ENCODE measurements at regions of chr18 and their contacts with region 1.

Region 1: DNA sequence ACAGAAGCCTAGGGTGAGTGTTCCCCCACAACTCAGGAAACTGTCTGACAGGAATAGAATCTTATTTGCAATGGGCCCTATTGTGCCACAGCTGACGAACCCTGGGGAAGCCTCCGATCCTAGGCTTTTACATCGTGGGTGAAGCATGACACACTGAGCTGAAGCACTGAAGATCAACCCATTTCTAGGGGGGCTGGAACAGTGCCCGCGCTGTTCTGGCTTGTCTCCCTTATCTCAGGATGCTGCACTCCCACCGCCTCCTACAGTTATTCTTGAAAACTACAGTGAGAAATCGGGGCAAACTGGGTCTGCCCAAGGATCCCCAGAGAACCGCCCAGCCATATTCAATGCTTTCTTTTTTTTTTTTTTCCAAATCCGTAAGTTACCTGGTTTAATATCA is 41.1 kb downstream of the NETO1 start:
- H3K4me3 Mint-ChIP-seq: no peak overlapping the region
- H3K27ac Mint-ChIP-seq: no peak overlapping the region
- H3K4me1 Mint-ChIP-seq: no peaks in the 10 kb centered on the region
- H3K27me3 Mint-ChIP-seq: no peaks in the 10 kb centered on the region

Region 2: GRCh38 chr18:72878143-72878542 is 51.4 kb after region 1 on chr18:
- intact Hi-C with region 1: loop called (anchors 10 kb)
- H3K4me3 Mint-ChIP-seq: no peak overlapping the region
- H3K27ac Mint-ChIP-seq: no peak overlapping the region
- H3K4me1 Mint-ChIP-seq: no peaks in the 10 kb centered on the region
- H3K27me3 Mint-ChIP-seq: peaks cover 2% of the 10 kb centered on the region

Region 3: DNA sequence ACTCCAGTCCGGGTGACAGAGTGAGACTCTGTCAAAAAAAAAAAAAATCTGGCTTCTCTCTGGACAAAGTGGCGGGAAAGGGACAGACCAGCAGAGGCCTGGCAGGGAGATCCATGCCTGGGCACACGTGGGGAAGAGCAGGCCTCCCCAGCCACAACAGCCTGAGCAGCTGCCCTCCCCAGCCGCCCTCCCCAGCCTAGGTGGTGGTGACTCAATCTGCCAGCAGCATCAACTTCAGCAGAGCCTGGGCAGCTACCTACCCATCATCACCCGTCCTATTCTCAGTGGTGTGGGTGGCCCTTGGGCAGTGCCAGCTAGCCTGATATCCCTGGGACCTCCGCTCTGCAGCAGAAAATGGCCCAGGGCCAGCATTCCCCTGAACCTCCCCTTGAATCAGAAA is 708.5 kb after region 1 on chr18:
- intact Hi-C with region 1: no loop called
- H3K4me3 Mint-ChIP-seq: no peak overlapping the region
- H3K27ac Mint-ChIP-seq: no peak overlapping the region
- H3K4me1 Mint-ChIP-seq: no peaks in the 10 kb centered on the region
- H3K27me3 Mint-ChIP-seq: no peaks in the 10 kb centered on the region

Measured in dendritic cell treated with granulocyte-macrophage colony-stimulating factor and Interleukin-4, amounts not matched to agents 40 ng/mL and 50 ng/mL, for 4 days (primary cell).